Mammary epithelial cell (primary cell): ENCODE measurements at regions of chr3 and their contacts with region 1.

Region 1: GRCh38 chr3:24640330-24640877 is 145.8 kb upstream of the THRB start:
- DNase-seq: peak; percentile 43
- H3K4me3 ChIP-seq: no peak overlapping the region
- H3K27ac ChIP-seq: no peak overlapping the region
- H3K4me1 ChIP-seq: no peaks in the 10 kb centered on the region
- H3K27me3 ChIP-seq: no peaks in the 10 kb centered on the region
- CTCF ChIP-seq: peak; percentile 68 to 75

Region 2: DNA sequence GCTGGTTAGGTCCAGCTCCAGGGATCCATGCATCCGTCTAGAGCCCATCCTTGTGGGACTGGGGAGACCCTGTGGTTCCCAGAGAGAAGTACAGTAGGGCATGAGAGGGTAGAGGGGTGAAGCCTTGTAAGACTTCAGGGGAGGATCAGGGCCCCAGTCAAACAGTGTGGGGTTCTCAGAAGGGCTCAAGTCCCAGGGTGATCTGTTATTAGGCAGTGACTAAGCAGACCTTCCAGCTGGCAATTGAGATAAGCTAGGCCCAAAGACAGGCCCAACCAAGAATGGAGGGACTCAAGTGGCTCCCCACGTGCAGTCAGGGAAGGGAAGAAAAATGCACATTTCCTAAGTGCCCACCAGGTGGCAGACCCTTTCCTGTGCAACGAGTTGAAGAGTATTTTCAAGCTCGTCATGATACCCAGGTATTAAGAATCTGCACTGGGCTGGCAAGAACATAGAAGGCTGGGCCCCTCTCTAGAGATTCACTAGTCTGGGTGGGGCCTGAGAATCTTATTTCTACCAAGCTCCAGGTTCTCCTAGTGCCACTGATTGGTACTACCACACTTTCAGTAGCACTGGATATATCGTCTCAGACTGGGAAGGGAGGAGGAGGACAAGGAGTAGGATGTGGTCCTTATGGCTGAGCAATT is 454.5 kb before region 1 on chr3:
- CTCF ChIA-PET with region 1: no interaction called
- dilution Hi-C with region 1: no loop called
- in situ Hi-C with region 1: no loop called
- intact Hi-C with region 1: loop called (anchors 2 kb)
- DNase-seq: peak; percentile 58
- H3K4me3 ChIP-seq: no peak overlapping the region
- H3K27ac ChIP-seq: no peak overlapping the region
- H3K4me1 ChIP-seq: no peaks in the 10 kb centered on the region
- H3K27me3 ChIP-seq: no peaks in the 10 kb centered on the region
- CTCF ChIP-seq: peak; percentile 64 to 66

Region 3: DNA sequence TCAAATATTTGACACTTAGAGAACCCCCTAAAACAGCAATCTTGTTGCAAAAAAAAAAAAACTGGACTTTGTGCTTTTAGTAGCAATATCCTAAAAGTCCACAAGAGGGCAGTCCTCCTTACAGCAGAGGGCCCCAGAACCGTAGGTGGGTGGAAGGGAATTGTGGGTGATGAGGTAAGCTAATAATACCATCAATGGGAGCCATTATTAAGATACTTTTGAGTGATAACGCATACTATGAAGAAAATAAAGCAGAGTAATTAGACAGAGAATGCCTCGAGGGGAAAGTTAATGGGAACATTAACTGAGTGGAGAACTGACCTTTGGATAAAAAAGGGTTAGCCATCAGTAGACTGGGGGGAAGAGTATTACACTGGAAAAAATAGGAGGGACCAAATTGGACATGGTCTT is 375.7 kb before region 1 on chr3:
- CTCF ChIA-PET with region 1: no interaction called
- dilution Hi-C with region 1: no loop called
- in situ Hi-C with region 1: no loop called
- intact Hi-C with region 1: loop called (anchors 1 kb)
- DNase-seq: peak; percentile 29
- H3K4me3 ChIP-seq: no peak overlapping the region
- H3K27ac ChIP-seq: no peak overlapping the region
- H3K4me1 ChIP-seq: no peaks in the 10 kb centered on the region
- H3K27me3 ChIP-seq: no peaks in the 10 kb centered on the region
- CTCF ChIP-seq: peak; percentile 71 to 82

Region 4: GRCh38 chr3:24494618-24495325 is 145.6 kb before region 1 on chr3 and contains the start of gene THRB:
- CTCF ChIA-PET with region 1: no interaction called
- dilution Hi-C with region 1: no loop called
- in situ Hi-C with region 1: no loop called
- intact Hi-C with region 1: loop called (anchors 1 kb)
- DNase-seq: peak; percentile 77
- H3K4me3 ChIP-seq: peak within 1 kb of the TSS; percentile 79 to 97 (median 91)
- H3K27ac ChIP-seq: peak within 1 kb of the TSS; percentile 78
- H3K4me1 ChIP-seq: peaks cover 18% of the 10 kb centered on the region
- H3K27me3 ChIP-seq: no peaks in the 10 kb centered on the region
- CTCF ChIP-seq: peak in 1 of 2 donors; percentile 20
- total RNA-seq, gene THRB: 13.1 to 16.3 TPM

Region 5: GRCh38 chr3:24582431-24583403 is 57.7 kb before region 1 on chr3:
- CTCF ChIA-PET with region 1: no interaction called
- dilution Hi-C with region 1: no loop called
- in situ Hi-C with region 1: no loop called
- intact Hi-C with region 1: loop called (anchors 2 kb)
- DNase-seq: no peak
- H3K4me3 ChIP-seq: no peak overlapping the region
- H3K27ac ChIP-seq: no peak overlapping the region
- H3K4me1 ChIP-seq: no peaks in the 10 kb centered on the region
- H3K27me3 ChIP-seq: no peaks in the 10 kb centered on the region
- CTCF ChIP-seq: peak in 1 of 2 donors; percentile 60

Region 6: GRCh38 chr3:25441234-25441856 is 800.9 kb after region 1 on chr3:
- CTCF ChIA-PET with region 1: no interaction called
- dilution Hi-C with region 1: no loop called
- in situ Hi-C with region 1: no loop called
- intact Hi-C with region 1: no loop called
- DNase-seq: no peak
- H3K4me3 ChIP-seq: no peak overlapping the region
- H3K27ac ChIP-seq: no peak overlapping the region
- H3K4me1 ChIP-seq: no peaks in the 10 kb centered on the region
- H3K27me3 ChIP-seq: no peaks in the 10 kb centered on the region
- CTCF ChIP-seq: peak; percentile 68 to 81